Activated CD8-positive, alpha-beta memory T cell treated with anti-CD3 and anti-CD28 coated beads, Interleukin-2, amount 10 ng/mL, durations not matched to agents 7 days and 5 days (primary cell): ENCODE measurements at regions of chr12 and their contacts with region 1.

Region 1: DNA sequence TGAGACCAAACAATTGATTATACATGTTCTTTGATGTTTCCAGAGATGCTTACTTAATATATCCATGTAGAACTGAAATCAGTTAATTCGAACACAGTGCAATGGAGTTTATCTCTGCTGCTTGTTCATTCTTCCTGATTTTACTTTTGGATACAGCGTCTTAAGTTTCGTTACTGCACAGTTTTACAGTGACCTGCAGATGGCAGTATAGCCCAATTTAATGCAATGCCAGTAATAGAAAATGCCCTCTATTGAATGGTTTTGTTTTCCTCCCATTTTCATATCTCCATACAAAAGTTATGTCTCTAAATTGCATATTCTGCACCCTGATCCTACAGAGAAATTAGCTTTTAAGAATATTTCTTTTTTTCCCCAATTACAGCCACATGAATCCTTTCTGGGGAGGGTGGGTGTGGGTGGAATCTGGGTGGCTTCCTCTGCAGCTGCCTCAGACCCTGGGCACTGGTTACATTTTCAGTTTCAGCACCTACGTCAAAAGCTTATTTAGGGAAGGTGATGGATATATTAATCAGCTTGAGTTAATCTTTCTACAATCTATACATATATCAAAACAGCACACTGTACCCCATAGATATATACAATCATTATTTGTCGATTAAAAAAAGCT is 101.1 kb upstream of the DCD start:
- DNase-seq: peak; percentile 53
- ATAC-seq: peak; percentile 96
- H3K4me3 Mint-ChIP-seq: peak overlapping the region; percentile 39
- H3K27ac Mint-ChIP-seq: peak overlapping the region; percentile 67
- H3K4me1 Mint-ChIP-seq: peaks cover 21% of the 10 kb centered on the region
- H3K27me3 Mint-ChIP-seq: peaks cover 5% of the 10 kb centered on the region

Region 2: GRCh38 chr12:54596526-54596946 is 152.8 kb before region 1 on chr12:
- CTCF ChIA-PET with region 1: no interaction called
- DNase-seq: peak; percentile 63
- ATAC-seq: peak; percentile 64
- H3K4me3 Mint-ChIP-seq: no peak overlapping the region
- H3K27ac Mint-ChIP-seq: no peak overlapping the region
- H3K4me1 Mint-ChIP-seq: no peaks in the 10 kb centered on the region
- H3K27me3 Mint-ChIP-seq: peaks cover 25% of the 10 kb centered on the region

Region 3: GRCh38 chr12:54723379-54724256 is 25.7 kb before region 1 on chr12:
- CTCF ChIA-PET with region 1: interaction called, 25 read pairs
- DNase-seq: peak; percentile 47
- ATAC-seq: peak; percentile 78
- H3K4me3 Mint-ChIP-seq: no peak overlapping the region
- H3K27ac Mint-ChIP-seq: no peak overlapping the region
- H3K4me1 Mint-ChIP-seq: peaks cover 7% of the 10 kb centered on the region
- H3K27me3 Mint-ChIP-seq: peaks cover 28% of the 10 kb centered on the region

Region 4: GRCh38 chr12:54853995-54854566 is 104.8 kb after region 1 on chr12 and contains the start of gene MUCL1:
- CTCF ChIA-PET with region 1: interaction called, 37 read pairs
- DNase-seq: peak; percentile 84
- ATAC-seq: peak; percentile 100
- H3K4me3 Mint-ChIP-seq: no peak within 1 kb of the TSS
- H3K27ac Mint-ChIP-seq: no peak within 1 kb of the TSS
- H3K4me1 Mint-ChIP-seq: peaks cover 6% of the 10 kb centered on the region
- H3K27me3 Mint-ChIP-seq: no peaks in the 10 kb centered on the region
- total RNA-seq, gene MUCL1: not detected

Region 5: GRCh38 chr12:54958048-54958658 is 208.8 kb after region 1 on chr12:
- CTCF ChIA-PET with region 1: interaction called, 48 read pairs
- DNase-seq: peak; percentile 61
- ATAC-seq: peak; percentile 49
- H3K4me3 Mint-ChIP-seq: no peak overlapping the region
- H3K27ac Mint-ChIP-seq: no peak overlapping the region
- H3K4me1 Mint-ChIP-seq: peaks cover 44% of the 10 kb centered on the region
- H3K27me3 Mint-ChIP-seq: no peaks in the 10 kb centered on the region

Region 6: GRCh38 chr12:55092579-55092978 is 343.3 kb after region 1 on chr12:
- CTCF ChIA-PET with region 1: no interaction called
- DNase-seq: no peak
- ATAC-seq: no peak
- H3K4me3 Mint-ChIP-seq: no peak overlapping the region
- H3K27ac Mint-ChIP-seq: no peak overlapping the region
- H3K4me1 Mint-ChIP-seq: no peaks in the 10 kb centered on the region
- H3K27me3 Mint-ChIP-seq: peaks cover 24% of the 10 kb centered on the region